Activated CD4-positive, alpha-beta T cell treated with anti-CD3 and anti-CD28 coated beads for 36 hours (primary cell): ENCODE measurements at regions of chrX and their contacts with region 1.

Region 1: GRCh38 chrX:112841114-112841819 is 636 bp upstream of the AMOT start:
- DNase-seq: peak; percentile 82
- ATAC-seq: peak; percentile 97
- H3K4me3 Mint-ChIP-seq: peak overlapping the region; percentile 82
- H3K27ac Mint-ChIP-seq: peak overlapping the region; percentile 13
- H3K4me1 Mint-ChIP-seq: peaks cover 13% of the 10 kb centered on the region
- H3K27me3 Mint-ChIP-seq: peaks cover 4% of the 10 kb centered on the region

Region 2: GRCh38 chrX:111680988-111681779 is 1160.1 kb before region 1 on chrX and contains the start of gene ALG13:
- CTCF ChIA-PET with region 1: no interaction called
- POLR2A ChIA-PET with region 1: no interaction called
- intact Hi-C with region 1: loop called (anchors 5 to 10 kb)
- DNase-seq: peak; percentile 92
- ATAC-seq: peak; percentile 95
- H3K4me3 Mint-ChIP-seq: peak within 1 kb of the TSS; percentile 80
- H3K27ac Mint-ChIP-seq: peak within 1 kb of the TSS; percentile 93
- H3K4me1 Mint-ChIP-seq: peaks cover 23% of the 10 kb centered on the region
- H3K27me3 Mint-ChIP-seq: no peaks in the 10 kb centered on the region
- total RNA-seq, gene ALG13: 51.5 to 58.6 TPM

Region 3: GRCh38 chrX:112678831-112679230 is 162.4 kb before region 1 on chrX:
- CTCF ChIA-PET with region 1: no interaction called
- POLR2A ChIA-PET with region 1: no interaction called
- intact Hi-C with region 1: loop called in 1 of 2 experiments (anchors 5 kb)
- DNase-seq: no peak
- ATAC-seq: peak; percentile 81
- H3K4me3 Mint-ChIP-seq: peak overlapping the region; percentile 67
- H3K27ac Mint-ChIP-seq: peak overlapping the region; percentile 74
- H3K4me1 Mint-ChIP-seq: peaks cover 37% of the 10 kb centered on the region
- H3K27me3 Mint-ChIP-seq: no peaks in the 10 kb centered on the region

Region 4: DNA sequence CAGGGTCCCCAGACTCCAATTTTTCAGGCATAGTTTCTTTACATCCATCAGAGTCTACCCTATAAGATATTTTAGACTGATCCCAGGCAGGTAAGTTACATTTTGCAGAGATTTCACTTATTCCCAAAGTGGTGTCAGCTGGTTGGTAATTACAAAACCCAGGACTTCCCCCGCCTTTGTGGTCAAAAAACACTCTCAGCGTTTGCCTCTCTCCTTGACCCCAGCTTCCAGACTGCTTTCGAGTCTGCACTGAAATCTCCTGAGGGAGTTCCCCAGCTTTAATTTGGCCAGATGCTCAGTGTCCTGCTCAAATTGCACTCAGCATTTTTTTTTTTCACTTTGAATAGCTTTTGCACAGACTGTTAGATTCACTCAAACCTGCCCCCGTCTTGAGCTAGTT is 10.5 kb after region 1 on chrX:
- CTCF ChIA-PET with region 1: no interaction called
- POLR2A ChIA-PET with region 1: no interaction called
- intact Hi-C with region 1: loop called in 1 of 2 experiments (anchors 1 kb)
- DNase-seq: no peak
- ATAC-seq: no peak
- H3K4me3 Mint-ChIP-seq: no peak overlapping the region
- H3K27ac Mint-ChIP-seq: no peak overlapping the region
- H3K4me1 Mint-ChIP-seq: peaks cover 7% of the 10 kb centered on the region
- H3K27me3 Mint-ChIP-seq: peaks cover 2% of the 10 kb centered on the region